OCI-LY7 (cell line): ENCODE measurements at regions of chr7 and their contacts with region 1.

Region 1: GRCh38 chr7:51073171-51073570 is 243.4 kb downstream of the COBL start:
- DNase-seq: no peak
- H3K4me3 ChIP-seq: no peak overlapping the region
- H3K27ac ChIP-seq: no peak overlapping the region
- H3K4me1 ChIP-seq: no peaks in the 10 kb centered on the region
- CTCF ChIP-seq: no peak

Region 2: GRCh38 chr7:50068961-50069551 is 1004.1 kb before region 1 on chr7:
- CTCF ChIA-PET with region 1: no interaction called
- POLR2A ChIA-PET with region 1: interaction called, 11 read pairs
- intact Hi-C with region 1: no loop called
- DNase-seq: no peak
- H3K4me3 ChIP-seq: peak overlapping the region; percentile 17
- H3K27ac ChIP-seq: no peak overlapping the region
- H3K4me1 ChIP-seq: no peaks in the 10 kb centered on the region
- CTCF ChIP-seq: no peak

Region 3: GRCh38 chr7:51000956-51001355 is 72.2 kb before region 1 on chr7:
- CTCF ChIA-PET with region 1: no interaction called
- POLR2A ChIA-PET with region 1: no interaction called
- intact Hi-C with region 1: no loop called
- DNase-seq: no peak
- H3K4me3 ChIP-seq: no peak overlapping the region
- H3K27ac ChIP-seq: no peak overlapping the region
- H3K4me1 ChIP-seq: no peaks in the 10 kb centered on the region
- CTCF ChIP-seq: peak; percentile 50; the same call in 1 of the 2 replicates